ENCODE measurements at regions of chr4 and their contacts with region 1.

Region 1: GRCh38 chr4:53101191-53101581 is 239.1 kb downstream of the RASL11B start:
- DNase-seq: no peak
- H3K4me3 Mint-ChIP-seq: no peak overlapping the region
- H3K27ac Mint-ChIP-seq: peak overlapping the region; percentile 9
- H3K4me1 Mint-ChIP-seq: peaks cover 12% of the 10 kb centered on the region
- H3K27me3 Mint-ChIP-seq: no peaks in the 10 kb centered on the region

Region 2: DNA sequence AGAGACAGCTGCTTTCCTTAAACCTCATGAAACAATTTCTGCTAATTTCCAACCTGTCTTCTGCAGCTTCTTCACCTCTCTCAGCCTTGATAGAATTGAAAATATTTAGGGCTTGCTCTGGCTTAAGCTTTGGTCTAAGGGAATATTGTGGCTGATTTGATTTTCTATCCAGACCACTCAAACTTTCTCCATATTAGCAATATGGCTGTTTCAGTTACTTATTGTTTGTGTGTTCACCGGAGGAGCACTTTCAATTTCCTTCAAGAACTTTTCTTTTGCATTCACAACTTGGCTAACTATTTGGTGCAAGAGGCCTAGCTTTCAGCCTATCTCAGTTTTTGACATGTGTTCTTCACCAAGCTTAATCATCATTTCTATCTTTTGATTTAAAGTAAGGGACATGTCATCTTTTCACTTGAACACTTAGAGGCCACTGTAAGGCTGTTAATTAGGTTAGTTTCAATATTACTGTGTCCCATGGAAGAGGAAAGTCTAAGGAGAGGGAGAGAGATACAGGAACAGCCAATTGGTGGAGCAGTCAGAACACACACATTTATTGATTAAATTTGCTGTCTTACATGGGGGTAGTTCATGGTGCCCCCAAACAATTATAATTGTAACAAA is 25.9 kb before region 1 on chr4:
- CTCF ChIA-PET with region 1: no interaction called
- POLR2A ChIA-PET with region 1: no interaction called
- intact Hi-C with region 1: loop called (anchors 1 kb)
- DNase-seq: no peak
- H3K4me3 Mint-ChIP-seq: no peak overlapping the region
- H3K27ac Mint-ChIP-seq: no peak overlapping the region
- H3K4me1 Mint-ChIP-seq: peaks cover 8% of the 10 kb centered on the region
- H3K27me3 Mint-ChIP-seq: no peaks in the 10 kb centered on the region

Region 3: DNA sequence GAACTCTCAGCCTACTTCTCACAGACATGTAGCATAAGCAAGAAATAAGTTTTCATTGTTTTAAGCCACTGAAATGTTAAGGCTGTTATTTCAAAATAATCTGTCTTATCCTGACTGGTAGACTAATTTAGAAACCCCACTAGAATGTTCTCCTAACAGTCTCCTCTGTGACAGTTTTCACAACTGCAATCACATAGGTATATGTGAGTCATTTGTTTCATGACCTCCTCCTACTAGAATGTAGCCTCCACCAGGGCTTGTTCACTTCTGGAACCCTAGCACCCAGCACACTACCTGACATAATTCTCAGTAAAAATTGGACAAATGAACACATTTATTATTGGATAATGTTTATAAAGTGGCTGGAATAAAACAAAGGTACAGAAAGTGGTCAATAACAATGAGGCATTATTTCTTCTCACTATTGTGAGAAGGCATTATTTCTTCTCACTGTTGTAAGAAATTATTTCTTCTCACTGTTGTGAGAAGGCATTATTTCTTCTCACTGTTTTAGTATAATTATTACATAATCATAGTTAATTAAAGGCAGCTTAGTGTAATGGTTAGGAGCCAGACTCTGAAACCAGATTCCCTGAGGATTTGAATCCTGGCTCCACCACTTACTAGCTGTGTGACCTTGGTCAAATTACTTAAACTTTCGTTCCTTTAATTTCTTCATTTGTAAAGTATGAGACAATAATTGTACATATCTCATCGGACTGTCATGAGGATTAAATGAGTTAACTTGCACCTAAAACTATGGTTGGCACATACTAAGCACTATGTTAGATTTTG is 12.4 kb after region 1 on chr4:
- CTCF ChIA-PET with region 1: no interaction called
- POLR2A ChIA-PET with region 1: no interaction called
- intact Hi-C with region 1: loop called (anchors 1 kb)
- DNase-seq: peak; percentile 24
- H3K4me3 Mint-ChIP-seq: no peak overlapping the region
- H3K27ac Mint-ChIP-seq: peak overlapping the region; percentile 69
- H3K4me1 Mint-ChIP-seq: peaks cover 32% of the 10 kb centered on the region
- H3K27me3 Mint-ChIP-seq: no peaks in the 10 kb centered on the region

Region 4: GRCh38 chr4:53150631-53151488 is 49.7 kb after region 1 on chr4:
- CTCF ChIA-PET with region 1: no interaction called
- POLR2A ChIA-PET with region 1: no interaction called
- intact Hi-C with region 1: no loop called
- DNase-seq: no peak
- H3K4me3 Mint-ChIP-seq: no peak overlapping the region
- H3K27ac Mint-ChIP-seq: no peak overlapping the region
- H3K4me1 Mint-ChIP-seq: no peaks in the 10 kb centered on the region
- H3K27me3 Mint-ChIP-seq: no peaks in the 10 kb centered on the region